IMR-90 (cell line): ENCODE measurements at regions of chr12 and their contacts with region 1.

Region 1: GRCh38 chr12:43338848-43339526 is 213.0 kb downstream of the ADAMTS20 start:
- DNase-seq: peak; percentile 76
- ATAC-seq: peak; percentile 92
- H3K4me3 ChIP-seq: no peak overlapping the region
- H3K27ac ChIP-seq: no peak overlapping the region
- H3K4me1 ChIP-seq: peaks cover 3% of the 10 kb centered on the region
- H3K27me3 ChIP-seq: no peaks in the 10 kb centered on the region
- CTCF ChIP-seq: peak; percentile 87
- POLR2A ChIP-seq: no peak
- RAD21 ChIP-seq: peak; percentile 88

Region 2: DNA sequence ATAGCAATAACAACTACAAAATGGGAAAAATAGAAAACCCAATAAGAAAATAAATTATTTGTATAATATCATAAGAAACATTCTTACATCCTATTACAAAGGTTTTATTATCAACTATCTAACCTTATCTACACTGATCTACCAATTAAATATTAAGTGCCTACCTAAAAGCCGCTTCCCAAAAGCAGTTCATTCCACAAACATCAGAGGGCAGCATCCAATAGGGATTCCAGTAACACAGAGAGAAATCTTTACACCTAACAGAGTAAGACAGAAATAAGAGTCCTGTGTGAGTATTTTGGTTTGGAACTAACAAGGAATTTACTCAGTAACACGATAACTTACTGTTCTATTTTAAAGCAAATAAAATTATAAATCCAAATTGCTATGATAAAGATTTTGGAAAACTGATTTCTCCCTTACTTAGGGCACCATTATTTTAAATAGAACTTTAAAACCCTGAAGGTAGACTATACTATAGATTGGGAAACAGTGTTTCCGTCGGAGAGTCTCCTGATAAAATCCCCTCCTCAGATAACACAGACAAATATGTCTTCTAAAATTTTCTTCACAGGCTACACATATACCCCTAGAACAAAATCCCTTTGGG is 1209.3 kb before region 1 on chr12:
- CTCF ChIA-PET with region 1: no interaction called
- POLR2A ChIA-PET with region 1: no interaction called
- dilution Hi-C with region 1: no loop called
- in situ Hi-C with region 1: no loop called
- intact Hi-C with region 1: loop called (anchors 5 kb)
- DNase-seq: peak; percentile 80
- ATAC-seq: peak; percentile 82
- H3K4me3 ChIP-seq: no peak overlapping the region
- H3K27ac ChIP-seq: no peak overlapping the region
- H3K4me1 ChIP-seq: peaks cover 5% of the 10 kb centered on the region
- H3K27me3 ChIP-seq: no peaks in the 10 kb centered on the region
- CTCF ChIP-seq: peak; percentile 93
- POLR2A ChIP-seq: no peak
- RAD21 ChIP-seq: peak; percentile 96

Region 3: GRCh38 chr12:42482445-42483237 is 856.3 kb before region 1 on chr12:
- CTCF ChIA-PET with region 1: interaction called, 10 read pairs
- POLR2A ChIA-PET with region 1: no interaction called
- dilution Hi-C with region 1: no loop called
- in situ Hi-C with region 1: loop called (anchors 5 kb)
- intact Hi-C with region 1: loop called (anchors 1 kb)
- DNase-seq: peak; percentile 65
- ATAC-seq: peak; percentile 80
- H3K4me3 ChIP-seq: peak overlapping the region; percentile 91
- H3K27ac ChIP-seq: peak overlapping the region; percentile 91
- H3K4me1 ChIP-seq: peaks cover 7% of the 10 kb centered on the region
- H3K27me3 ChIP-seq: no peaks in the 10 kb centered on the region
- CTCF ChIP-seq: peak; percentile 93
- POLR2A ChIP-seq: no peak
- RAD21 ChIP-seq: peak; percentile 82

Region 4: DNA sequence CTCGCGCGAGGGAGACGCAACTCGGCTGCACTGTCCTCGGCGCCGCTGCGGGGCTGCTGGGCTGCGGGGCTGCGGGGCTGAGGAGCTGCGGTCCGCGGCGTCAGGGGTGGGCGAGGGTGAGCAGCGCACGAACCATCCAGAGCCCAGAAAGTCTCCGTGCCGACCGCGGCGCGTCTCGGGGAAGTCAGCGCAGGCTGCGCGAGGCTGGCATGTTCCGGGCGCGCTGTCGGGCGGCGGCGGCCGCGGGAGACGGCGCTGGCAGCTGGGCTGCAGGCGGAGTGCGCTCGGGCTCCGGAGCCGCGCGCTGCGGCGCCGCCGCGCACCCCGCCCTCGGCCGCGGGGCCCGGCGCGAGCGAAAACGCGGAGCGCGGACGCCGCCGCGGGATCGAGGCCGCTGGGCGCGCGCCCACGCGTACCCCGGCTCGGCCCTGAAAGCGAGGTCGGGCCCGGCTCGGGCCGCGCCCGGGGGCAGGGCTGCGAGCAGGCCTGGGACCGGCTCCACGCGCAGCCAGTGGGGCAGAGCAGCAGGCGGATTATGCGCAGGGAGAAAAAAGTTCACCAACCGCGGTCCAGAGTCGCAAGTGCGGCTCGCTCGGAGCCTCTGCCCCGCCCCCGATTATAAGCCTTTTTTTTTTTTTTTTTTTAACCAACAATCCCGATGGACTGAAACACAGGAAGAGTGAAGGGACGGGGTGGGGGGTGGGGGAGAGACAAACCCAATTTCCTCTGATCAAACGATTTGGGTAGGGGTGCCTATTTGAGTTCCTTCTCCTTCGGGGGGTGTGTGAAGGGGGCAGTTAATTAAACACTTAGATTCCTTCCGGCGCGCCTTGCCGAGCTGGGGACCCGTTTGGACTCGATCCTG is 749.3 kb before region 1 on chr12 and contains the start of gene PRICKLE1:
- CTCF ChIA-PET with region 1: no interaction called
- POLR2A ChIA-PET with region 1: no interaction called
- dilution Hi-C with region 1: no loop called
- in situ Hi-C with region 1: loop called (anchors 10 kb)
- intact Hi-C with region 1: loop called (anchors 1 kb)
- DNase-seq: peak; percentile 60
- ATAC-seq: peak; percentile 88
- H3K4me3 ChIP-seq: peak within 1 kb of the TSS; percentile 89
- H3K27ac ChIP-seq: peak within 1 kb of the TSS; percentile 58
- H3K4me1 ChIP-seq: peaks cover 17% of the 10 kb centered on the region
- H3K27me3 ChIP-seq: peaks cover 14% of the 10 kb centered on the region
- CTCF ChIP-seq: no peak
- POLR2A ChIP-seq: no peak
- RAD21 ChIP-seq: no peak; the same call in 1 of the 2 replicates
- total RNA-seq, gene PRICKLE1: 20.8 and 21.3 TPM in 2 replicates

Region 5: DNA sequence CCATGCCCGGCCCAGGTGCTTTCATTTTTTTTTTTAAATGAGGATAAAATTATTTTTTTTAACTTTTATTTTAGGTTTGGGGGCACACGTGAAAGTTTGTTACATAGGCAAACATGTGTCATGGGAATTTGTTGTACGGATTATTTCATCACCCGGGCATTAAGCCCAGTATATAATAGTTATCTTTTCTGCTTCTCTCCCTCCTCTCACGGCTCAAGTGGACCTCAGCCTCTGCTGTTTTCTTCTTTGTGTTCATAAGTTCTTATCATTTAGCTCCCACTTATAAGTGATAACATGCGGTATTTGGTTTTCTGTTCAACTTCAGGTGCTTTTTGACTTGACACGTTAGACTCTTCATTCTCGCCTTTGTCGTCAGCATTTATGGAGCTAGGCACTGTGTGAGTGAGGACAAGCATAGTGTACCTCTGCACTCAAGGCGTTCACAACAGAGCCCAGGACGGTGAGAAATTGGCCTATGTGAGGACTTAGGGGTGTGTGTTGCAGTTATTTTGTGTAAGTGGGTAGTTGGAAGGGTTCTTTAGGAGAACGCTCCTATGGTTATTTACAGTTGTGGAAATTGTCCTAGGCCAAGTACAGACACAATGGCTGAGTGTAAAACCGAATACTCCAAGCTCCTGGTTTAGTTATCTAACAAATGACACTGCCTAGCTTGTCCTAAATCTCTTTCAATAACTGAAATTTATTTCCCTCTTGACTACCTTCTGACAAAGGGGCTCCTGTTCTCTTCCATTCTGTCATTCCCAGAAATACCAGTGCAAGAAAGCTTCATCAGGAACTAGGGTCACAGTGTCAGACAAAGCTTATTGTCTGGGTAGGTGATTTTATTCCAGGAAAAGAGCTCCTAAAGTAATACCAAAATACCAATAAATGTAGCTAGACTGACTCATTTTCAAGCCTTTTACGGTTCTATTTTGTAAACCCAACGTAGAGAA is 548.9 kb before region 1 on chr12:
- CTCF ChIA-PET with region 1: no interaction called
- POLR2A ChIA-PET with region 1: no interaction called
- dilution Hi-C with region 1: no loop called
- in situ Hi-C with region 1: no loop called
- intact Hi-C with region 1: loop called (anchors 5 kb)
- DNase-seq: no peak
- ATAC-seq: no peak
- H3K4me3 ChIP-seq: no peak overlapping the region
- H3K27ac ChIP-seq: no peak overlapping the region
- H3K4me1 ChIP-seq: peaks cover 17% of the 10 kb centered on the region
- H3K27me3 ChIP-seq: no peaks in the 10 kb centered on the region
- CTCF ChIP-seq: no peak
- POLR2A ChIP-seq: no peak
- RAD21 ChIP-seq: no peak

Region 6: DNA sequence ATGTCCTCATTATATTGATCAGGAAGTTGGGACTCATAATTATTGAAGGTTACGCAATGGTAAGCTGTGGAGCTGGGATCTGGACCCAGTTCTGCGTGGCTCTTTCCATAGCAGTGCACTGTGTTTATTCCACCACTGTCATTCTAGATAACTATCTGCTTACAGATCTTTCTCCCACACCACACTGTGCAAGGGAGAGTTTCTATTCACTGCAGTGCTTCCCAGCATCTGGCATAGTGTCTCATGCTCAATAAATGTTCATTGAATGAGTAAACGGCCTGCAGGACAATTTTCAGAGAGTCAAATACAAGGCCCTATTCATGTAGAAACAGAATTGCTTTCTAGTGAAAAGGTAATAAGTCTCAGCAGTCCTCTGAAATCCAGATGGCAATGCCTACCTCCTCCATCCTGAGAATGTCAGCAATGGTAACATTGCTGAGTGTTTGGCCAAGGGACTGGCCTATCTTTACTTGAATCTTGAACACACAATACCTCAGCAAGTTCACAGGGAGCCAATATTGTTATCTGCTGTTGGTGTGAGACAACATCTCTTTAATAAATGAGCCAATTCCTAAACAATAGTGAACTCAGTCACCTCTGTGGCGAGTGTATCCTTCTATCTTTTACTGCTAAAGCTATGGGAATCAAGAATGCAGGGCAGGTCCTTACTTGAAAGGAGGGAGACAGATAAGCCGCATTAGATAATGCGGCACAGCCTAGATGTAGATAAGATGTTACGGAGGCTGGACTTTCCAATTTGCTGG is 417.1 kb before region 1 on chr12:
- CTCF ChIA-PET with region 1: interaction called, 6 read pairs
- POLR2A ChIA-PET with region 1: no interaction called
- dilution Hi-C with region 1: no loop called
- in situ Hi-C with region 1: no loop called
- intact Hi-C with region 1: loop called (anchors 5 kb)
- DNase-seq: peak; percentile 77
- ATAC-seq: peak; percentile 79
- H3K4me3 ChIP-seq: no peak overlapping the region
- H3K27ac ChIP-seq: no peak overlapping the region
- H3K4me1 ChIP-seq: peaks cover 4% of the 10 kb centered on the region
- H3K27me3 ChIP-seq: no peaks in the 10 kb centered on the region; the same call in 1 of the 2 replicates
- CTCF ChIP-seq: no peak
- POLR2A ChIP-seq: no peak
- RAD21 ChIP-seq: no peak

Region 7: DNA sequence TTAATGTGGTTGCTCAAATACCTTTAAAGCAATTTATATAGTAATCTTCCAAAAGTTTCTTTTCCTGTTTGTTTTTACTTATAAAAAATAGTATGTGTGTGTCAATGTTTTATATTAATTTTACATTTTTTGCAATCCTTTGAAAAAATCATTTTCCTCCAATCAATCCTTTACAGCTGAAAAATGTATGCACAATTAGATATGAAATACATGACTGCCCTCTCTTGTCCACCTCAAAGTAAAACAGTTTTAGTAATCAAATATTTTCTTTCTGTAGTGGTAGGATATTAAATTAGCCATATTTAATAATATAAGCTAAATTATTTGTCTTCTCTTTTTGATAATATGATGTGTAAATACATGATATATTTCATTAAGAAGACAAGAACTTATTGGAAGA is 56.9 kb before region 1 on chr12:
- CTCF ChIA-PET with region 1: interaction called, 4 read pairs
- POLR2A ChIA-PET with region 1: no interaction called
- dilution Hi-C with region 1: no loop called
- in situ Hi-C with region 1: loop called (anchors 5 kb)
- intact Hi-C with region 1: loop called (anchors 2 kb)
- DNase-seq: peak; percentile 65
- ATAC-seq: peak; percentile 22; the same call in 1 of the 2 replicates
- H3K4me3 ChIP-seq: no peak overlapping the region
- H3K27ac ChIP-seq: no peak overlapping the region
- H3K4me1 ChIP-seq: peaks cover 6% of the 10 kb centered on the region; the same call in 1 of the 2 replicates
- H3K27me3 ChIP-seq: no peaks in the 10 kb centered on the region
- CTCF ChIP-seq: peak; percentile 69
- POLR2A ChIP-seq: no peak
- RAD21 ChIP-seq: peak; percentile 78